Dendritic cell treated with granulocyte-macrophage colony-stimulating factor and Interleukin-4, amounts not matched to agents 40 ng/mL and 50 ng/mL, for 4 days (primary cell): ENCODE measurements at regions of chr7 and their contacts with region 1.

Region 1: GRCh38 chr7:143042159-143042789 is 9.9 kb upstream of the OR6V1 start:
- H3K4me3 Mint-ChIP-seq: no peak overlapping the region
- H3K27ac Mint-ChIP-seq: peak overlapping the region; percentile 9
- H3K4me1 Mint-ChIP-seq: peaks cover 29% of the 10 kb centered on the region
- H3K27me3 Mint-ChIP-seq: peaks cover 3% of the 10 kb centered on the region

Region 2: GRCh38 chr7:143131781-143132180 is 89.5 kb after region 1 on chr7 and contains the start of gene PIP:
- intact Hi-C with region 1: loop called (anchors 10 kb)
- H3K4me3 Mint-ChIP-seq: no peak within 1 kb of the TSS
- H3K27ac Mint-ChIP-seq: peak within 1 kb of the TSS; percentile 86
- H3K4me1 Mint-ChIP-seq: peaks cover 59% of the 10 kb centered on the region
- H3K27me3 Mint-ChIP-seq: peaks cover 2% of the 10 kb centered on the region